ENCODE measurements at regions of chr3 and their contacts with region 1.

Region 1: GRCh38 chr3:164897355-164897754 is 180.9 kb downstream of the SI start:
- DNase-seq: no peak
- ATAC-seq: no peak
- H3K4me3 ChIP-seq: no peak overlapping the region
- H3K4me3 Mint-ChIP-seq: no peak overlapping the region
- H3K27ac ChIP-seq: no peak overlapping the region
- H3K27ac Mint-ChIP-seq: no peak overlapping the region
- H3K4me1 ChIP-seq: no peaks in the 10 kb centered on the region
- H3K4me1 Mint-ChIP-seq: no peaks in the 10 kb centered on the region
- H3K27me3 ChIP-seq: no peaks in the 10 kb centered on the region
- H3K27me3 Mint-ChIP-seq: no peaks in the 10 kb centered on the region

Region 2: DNA sequence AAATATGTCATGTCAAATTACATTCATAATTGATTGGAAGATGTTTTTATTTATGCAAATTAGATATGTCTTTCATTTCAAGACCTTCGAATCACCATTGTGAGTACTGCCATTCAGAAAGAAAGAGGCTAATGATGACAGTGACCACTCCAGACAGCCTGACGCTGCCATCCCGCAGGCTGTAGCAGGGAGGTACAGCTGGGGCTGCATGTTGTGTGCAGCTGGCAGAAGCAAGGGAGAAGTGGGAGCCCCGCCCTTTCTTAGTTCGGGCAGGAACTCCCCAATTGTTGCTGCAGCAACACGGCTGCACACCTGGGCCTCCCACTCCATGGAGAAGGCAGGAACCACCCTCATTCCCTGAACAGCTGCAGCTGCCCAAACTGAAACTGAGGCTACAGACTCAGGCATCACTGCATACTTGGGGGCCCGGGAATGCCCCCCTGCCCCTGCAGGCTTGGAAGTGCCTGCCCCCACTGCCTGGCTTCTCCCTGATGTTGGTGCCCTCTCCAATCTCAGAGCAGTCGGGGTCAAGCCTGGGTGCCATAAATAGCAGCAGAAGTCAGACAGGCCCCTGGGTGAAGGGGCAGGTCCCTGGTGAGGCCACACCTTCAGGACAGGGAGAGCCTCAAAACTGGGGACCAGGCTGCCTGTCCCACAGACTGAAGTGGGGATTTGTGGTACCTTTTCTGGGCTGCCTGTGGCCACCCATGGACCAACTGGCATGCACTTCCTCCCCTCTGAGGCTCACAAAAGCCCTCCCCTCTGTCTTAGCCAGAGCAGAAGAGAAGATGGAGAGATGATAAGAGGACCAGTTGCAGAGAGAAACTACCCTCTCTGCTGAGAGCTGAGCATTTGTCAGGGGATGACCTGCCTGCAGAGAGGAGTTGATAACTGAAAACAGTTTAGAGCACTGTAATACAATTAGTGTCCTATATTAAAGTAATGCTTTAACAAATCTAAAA is 783.7 kb before region 1 on chr3:
- CTCF ChIA-PET with region 1: no interaction called
- POLR2A ChIA-PET with region 1: no interaction called
- intact Hi-C with region 1: loop called in 1 of 2 experiments (anchors 5 kb)
- DNase-seq: no peak
- ATAC-seq: no peak
- H3K4me3 ChIP-seq: no peak overlapping the region
- H3K4me3 Mint-ChIP-seq: no peak overlapping the region
- H3K27ac ChIP-seq: no peak overlapping the region
- H3K27ac Mint-ChIP-seq: no peak overlapping the region
- H3K4me1 ChIP-seq: no peaks in the 10 kb centered on the region
- H3K4me1 Mint-ChIP-seq: no peaks in the 10 kb centered on the region
- H3K27me3 ChIP-seq: no peaks in the 10 kb centered on the region
- H3K27me3 Mint-ChIP-seq: no peaks in the 10 kb centered on the region

Region 3: GRCh38 chr3:164620423-164620822 is 276.9 kb before region 1 on chr3:
- CTCF ChIA-PET with region 1: no interaction called
- POLR2A ChIA-PET with region 1: no interaction called
- intact Hi-C with region 1: no loop called
- DNase-seq: no peak
- ATAC-seq: no peak
- H3K4me3 ChIP-seq: no peak overlapping the region
- H3K4me3 Mint-ChIP-seq: no peak overlapping the region
- H3K27ac ChIP-seq: no peak overlapping the region
- H3K27ac Mint-ChIP-seq: no peak overlapping the region
- H3K4me1 ChIP-seq: no peaks in the 10 kb centered on the region
- H3K4me1 Mint-ChIP-seq: no peaks in the 10 kb centered on the region
- H3K27me3 ChIP-seq: no peaks in the 10 kb centered on the region
- H3K27me3 Mint-ChIP-seq: no peaks in the 10 kb centered on the region

Measured in naive thymus-derived CD4-positive, alpha-beta T cell (primary cell).